MCF 10A (cell line): ENCODE measurements at regions of chr12 and their contacts with region 1.

Region 1: GRCh38 chr12:45762185-45763110 is 32.9 kb downstream of the ARID2 start:
- DNase-seq: peak; percentile 57
- H3K4me3 Mint-ChIP-seq: no peak overlapping the region
- H3K27ac Mint-ChIP-seq: no peak overlapping the region
- H3K4me1 Mint-ChIP-seq: peaks cover 13% of the 10 kb centered on the region
- H3K27me3 Mint-ChIP-seq: no peaks in the 10 kb centered on the region
- CTCF ChIP-seq: peak; percentile 39

Region 2: GRCh38 chr12:45745861-45746277 is 16.6 kb before region 1 on chr12:
- CTCF ChIA-PET with region 1: interaction called, 13 read pairs
- POLR2A ChIA-PET with region 1: interaction called, 8 read pairs
- intact Hi-C with region 1: no loop called
- DNase-seq: peak; percentile 27
- H3K4me3 Mint-ChIP-seq: no peak overlapping the region
- H3K27ac Mint-ChIP-seq: no peak overlapping the region
- H3K4me1 Mint-ChIP-seq: no peaks in the 10 kb centered on the region
- H3K27me3 Mint-ChIP-seq: no peaks in the 10 kb centered on the region
- CTCF ChIP-seq: peak; percentile 19

Region 3: GRCh38 chr12:45775964-45776363 is 13.5 kb after region 1 on chr12:
- CTCF ChIA-PET with region 1: interaction called, 23 read pairs
- POLR2A ChIA-PET with region 1: interaction called, 6 read pairs
- intact Hi-C with region 1: no loop called
- DNase-seq: no peak
- H3K4me3 Mint-ChIP-seq: no peak overlapping the region
- H3K27ac Mint-ChIP-seq: no peak overlapping the region
- H3K4me1 Mint-ChIP-seq: peaks cover 21% of the 10 kb centered on the region
- H3K27me3 Mint-ChIP-seq: no peaks in the 10 kb centered on the region
- CTCF ChIP-seq: no peak

Region 4: DNA sequence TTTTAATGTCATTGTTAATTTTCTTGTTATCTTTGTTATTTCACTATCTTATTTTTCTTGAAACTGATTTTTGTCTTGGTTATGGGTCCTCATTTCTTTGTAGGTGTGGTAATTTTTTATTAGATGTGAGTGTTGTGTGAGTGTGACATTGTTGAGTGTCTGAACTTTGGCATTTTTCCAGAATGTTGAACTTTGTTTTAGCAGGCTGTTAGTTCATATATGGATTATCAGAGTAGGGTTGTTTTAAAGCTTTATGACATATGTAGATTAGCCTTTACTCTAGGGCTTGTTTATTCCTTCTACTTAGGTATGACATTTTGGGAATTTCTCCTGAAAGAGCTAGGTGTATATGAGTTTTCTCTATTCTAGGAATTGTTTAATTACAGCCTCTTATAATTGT is 71.0 kb after region 1 on chr12:
- CTCF ChIA-PET with region 1: interaction called, 10 read pairs
- POLR2A ChIA-PET with region 1: no interaction called
- intact Hi-C with region 1: no loop called
- DNase-seq: no peak
- H3K4me3 Mint-ChIP-seq: no peak overlapping the region
- H3K27ac Mint-ChIP-seq: no peak overlapping the region
- H3K4me1 Mint-ChIP-seq: no peaks in the 10 kb centered on the region
- H3K27me3 Mint-ChIP-seq: no peaks in the 10 kb centered on the region
- CTCF ChIP-seq: no peak

Region 5: GRCh38 chr12:45893240-45893639 is 130.8 kb after region 1 on chr12:
- CTCF ChIA-PET with region 1: no interaction called
- POLR2A ChIA-PET with region 1: no interaction called
- intact Hi-C with region 1: loop called (anchors 10 kb)
- DNase-seq: no peak
- H3K4me3 Mint-ChIP-seq: no peak overlapping the region
- H3K27ac Mint-ChIP-seq: peak overlapping the region; percentile 55
- H3K4me1 Mint-ChIP-seq: no peaks in the 10 kb centered on the region
- H3K27me3 Mint-ChIP-seq: no peaks in the 10 kb centered on the region
- CTCF ChIP-seq: peak; percentile 7

Region 6: DNA sequence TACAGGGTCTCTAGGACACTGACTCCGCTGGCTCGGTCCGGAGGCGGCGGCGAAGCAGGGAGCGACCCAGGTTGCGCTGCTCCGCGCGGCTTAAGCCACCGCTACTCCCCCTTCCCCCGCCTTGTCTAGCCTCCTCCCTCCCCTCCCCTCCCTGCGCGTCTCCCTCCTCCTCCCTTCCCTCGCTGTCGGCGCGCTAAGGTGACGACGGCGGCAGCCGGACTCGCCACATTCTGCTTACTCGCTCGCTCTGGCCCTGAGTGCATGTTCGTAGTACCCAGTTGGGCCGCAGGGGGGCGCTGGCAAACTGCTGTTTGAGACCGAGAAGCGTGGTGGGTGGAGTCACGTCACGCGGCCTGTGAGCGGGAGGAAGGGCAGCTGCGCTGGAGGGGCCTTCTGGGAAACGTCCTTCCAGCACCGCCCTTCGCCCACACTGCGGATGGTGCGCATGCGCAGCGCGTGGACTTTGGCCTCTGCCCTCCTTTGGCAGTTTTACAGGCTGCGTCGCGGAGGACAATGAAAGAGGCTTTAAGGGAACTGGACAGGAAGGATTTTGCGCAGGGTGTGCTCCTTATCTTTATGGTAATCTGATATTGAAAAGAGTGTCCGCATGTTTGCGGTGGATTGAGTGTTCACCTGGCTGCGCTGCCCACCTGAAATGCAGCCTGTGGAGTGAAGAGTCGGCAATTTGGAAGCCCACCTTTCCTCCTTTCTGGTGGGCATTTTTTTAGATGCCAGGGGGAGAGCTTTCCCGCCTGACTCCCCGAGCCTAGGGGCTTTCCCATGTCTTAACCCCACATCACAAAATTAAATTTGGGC is 228.2 kb after region 1 on chr12 and contains the start of gene SCAF11:
- CTCF ChIA-PET with region 1: interaction called, 3 read pairs
- POLR2A ChIA-PET with region 1: interaction called, 3 read pairs
- intact Hi-C with region 1: loop called (anchors 2 kb)
- DNase-seq: peak; percentile 99
- H3K4me3 Mint-ChIP-seq: peak within 1 kb of the TSS; percentile 91
- H3K27ac Mint-ChIP-seq: peak within 1 kb of the TSS; percentile 93
- H3K4me1 Mint-ChIP-seq: peaks cover 31% of the 10 kb centered on the region
- H3K27me3 Mint-ChIP-seq: no peaks in the 10 kb centered on the region
- CTCF ChIP-seq: peak; percentile 85
- total RNA-seq, gene SCAF11: 106 and 107 TPM in 2 replicates

Region 7: DNA sequence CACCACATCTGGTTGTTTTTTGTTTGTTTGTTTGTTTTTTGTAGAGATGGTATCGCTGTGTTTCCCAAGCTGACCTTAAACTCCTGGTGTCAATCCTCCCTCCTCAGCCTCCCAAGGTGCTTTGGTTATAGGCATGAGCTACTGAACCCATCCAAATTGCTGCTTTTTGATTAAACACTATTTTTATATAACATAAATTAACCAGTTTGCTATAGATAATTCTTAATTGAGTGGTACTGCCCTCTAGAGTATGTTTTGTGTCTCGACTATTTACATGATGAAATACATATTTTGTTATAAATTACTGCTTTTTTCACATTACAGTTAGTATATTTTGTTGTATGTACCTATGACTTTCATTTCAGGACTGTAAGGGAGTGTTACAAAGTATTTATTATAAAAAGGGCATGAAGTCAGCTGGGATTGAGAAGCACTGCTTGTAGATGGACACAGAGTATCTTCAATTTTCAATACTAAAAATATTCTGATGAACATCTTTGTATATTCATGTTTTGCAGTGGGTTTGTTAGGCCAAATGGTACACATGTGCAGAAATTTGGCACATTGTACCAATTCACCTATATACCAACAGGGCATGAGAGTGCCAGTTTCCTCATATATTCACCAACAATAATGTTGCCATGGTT is 242.8 kb after region 1 on chr12:
- CTCF ChIA-PET with region 1: interaction called, 4 read pairs
- POLR2A ChIA-PET with region 1: no interaction called
- intact Hi-C with region 1: loop called (anchors 5 kb)
- DNase-seq: peak; percentile 8
- H3K4me3 Mint-ChIP-seq: no peak overlapping the region
- H3K27ac Mint-ChIP-seq: no peak overlapping the region
- H3K4me1 Mint-ChIP-seq: no peaks in the 10 kb centered on the region
- H3K27me3 Mint-ChIP-seq: peaks cover 8% of the 10 kb centered on the region
- CTCF ChIP-seq: peak; percentile 31